Activated T-helper 1 cell treated with anti-CD3 and anti-CD28 coated beads, Interleukin-12 subunit alpha, Interleukin-12 subunit beta, Interleukin-2, Interleukin-4 antibody, amounts not matched to agents 30 ng/mL and 10 ng/mL and 1 ng/mL, durations not matched to agents 14 hours and 24 hours and 36 hours (primary cell): ENCODE measurements at regions of chr12 and their contacts with region 1.

Region 1: GRCh38 chr12:2794736-2795289 is at the start of gene FKBP4:
- DNase-seq: peak; percentile 86
- H3K4me3 Mint-ChIP-seq: peak within 1 kb of the TSS; percentile 96
- H3K27ac Mint-ChIP-seq: peak within 1 kb of the TSS; percentile 75
- H3K4me1 Mint-ChIP-seq: peaks cover 15% of the 10 kb centered on the region
- H3K27me3 Mint-ChIP-seq: peaks cover 20% of the 10 kb centered on the region
- total RNA-seq, gene FKBP4: 247 and 269 TPM in 2 replicates

Region 2: DNA sequence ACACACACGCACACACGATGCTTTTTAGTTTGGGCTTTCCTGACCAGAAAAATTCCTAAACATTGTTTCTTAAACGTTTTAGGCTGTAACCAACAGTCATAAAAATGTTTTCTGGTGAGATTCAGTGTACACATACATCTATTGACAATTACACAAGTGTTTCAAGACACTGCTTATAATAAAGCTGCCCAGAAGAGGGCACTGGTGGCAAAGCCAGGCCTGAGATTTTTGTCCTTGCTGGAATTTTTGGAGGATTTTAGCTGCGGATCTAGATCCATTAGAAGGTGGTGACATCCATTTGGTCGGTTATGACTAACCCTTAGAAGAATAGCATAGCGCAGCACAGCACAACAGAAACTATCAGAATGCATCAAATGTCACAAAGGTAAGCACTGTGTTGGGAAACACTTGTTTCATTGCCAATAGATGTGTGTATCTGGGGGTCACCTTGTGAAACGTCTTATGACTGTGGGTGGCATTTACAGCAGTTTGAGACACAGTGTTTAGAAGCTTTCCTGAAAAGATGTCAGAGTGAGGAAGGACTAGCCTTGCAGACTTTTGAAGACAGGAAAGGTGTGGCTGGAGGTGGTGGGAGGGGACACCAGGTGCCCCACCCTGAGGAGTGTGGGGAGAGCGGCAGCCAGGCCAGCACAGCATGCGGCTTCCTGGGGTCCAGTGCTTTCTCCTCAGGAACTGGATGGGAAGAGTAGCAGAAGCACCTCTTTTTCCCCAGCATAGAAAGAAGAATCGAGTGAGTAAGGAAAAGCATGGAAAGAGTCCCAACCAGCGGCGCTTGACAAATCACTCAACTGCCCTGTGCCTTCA is 54.8 kb before region 1 on chr12:
- intact Hi-C with region 1: no loop called
- DNase-seq: no peak
- H3K4me3 Mint-ChIP-seq: no peak overlapping the region
- H3K27ac Mint-ChIP-seq: no peak overlapping the region
- H3K4me1 Mint-ChIP-seq: no peaks in the 10 kb centered on the region
- H3K27me3 Mint-ChIP-seq: no peaks in the 10 kb centered on the region

Region 3: DNA sequence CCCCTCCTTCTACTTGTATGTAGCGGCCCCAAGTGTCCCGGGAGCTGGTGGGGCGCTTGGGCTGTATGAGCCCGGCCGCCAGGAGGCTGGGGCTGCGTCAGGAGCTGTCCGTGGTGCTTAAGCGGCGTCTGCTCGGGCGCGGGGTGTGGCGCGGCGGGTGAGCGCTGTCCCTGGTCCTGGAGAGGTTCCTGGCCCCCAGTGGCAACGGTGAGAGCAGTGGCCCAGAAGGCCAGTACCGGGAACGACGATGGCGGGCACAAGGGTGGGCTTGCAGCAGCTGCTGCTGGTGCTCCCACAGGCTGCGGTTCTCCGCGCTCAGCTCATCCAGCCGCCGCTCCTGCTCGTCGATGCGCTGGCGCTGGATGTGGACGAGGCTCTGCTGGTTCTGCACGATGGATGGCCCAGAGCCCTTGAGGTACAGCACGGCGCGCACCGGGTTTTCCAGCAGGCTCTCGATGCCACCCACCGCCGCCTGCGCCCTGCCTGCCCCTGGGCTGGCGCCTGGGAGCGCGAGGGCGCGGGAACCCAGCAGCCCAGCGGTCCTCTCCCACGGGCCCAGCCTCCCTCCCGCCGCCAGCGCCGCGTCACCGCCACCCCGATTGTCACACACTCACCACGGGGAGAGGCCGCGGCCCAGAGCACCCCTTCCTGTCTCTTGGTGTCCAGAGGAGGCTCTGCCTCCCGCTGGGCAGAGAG is 42.0 kb before region 1 on chr12:
- intact Hi-C with region 1: loop called (anchors 5 kb)
- DNase-seq: peak; percentile 78
- H3K4me3 Mint-ChIP-seq: no peak overlapping the region
- H3K27ac Mint-ChIP-seq: no peak overlapping the region
- H3K4me1 Mint-ChIP-seq: no peaks in the 10 kb centered on the region
- H3K27me3 Mint-ChIP-seq: peaks cover 18% of the 10 kb centered on the region

Region 4: GRCh38 chr12:2853626-2854025 is 58.8 kb after region 1 on chr12:
- intact Hi-C with region 1: no loop called
- DNase-seq: peak; percentile 19
- H3K4me3 Mint-ChIP-seq: no peak overlapping the region
- H3K27ac Mint-ChIP-seq: no peak overlapping the region
- H3K4me1 Mint-ChIP-seq: no peaks in the 10 kb centered on the region
- H3K27me3 Mint-ChIP-seq: no peaks in the 10 kb centered on the region